Gastrocnemius medialis (tissue), 4 donors: ENCODE measurements at regions of chr6 and their contacts with region 1.

Region 1: GRCh38 chr6:42911171-42912021 is 4.5 kb upstream of the PTCRA start:
- DNase-seq: no peak
- ATAC-seq: no peak
- H3K4me3 ChIP-seq: peak overlapping the region in 2 of 4 donors; percentile 10 to 22
- H3K27ac ChIP-seq: no peak overlapping the region
- H3K4me1 ChIP-seq: peaks cover 0 to 2% of the 10 kb centered on the region in 2 donors
- H3K27me3 ChIP-seq: peaks cover 11 to 19% (median 15%) of the 10 kb centered on the region in 3 donors
- CTCF ChIP-seq: no peak
- POLR2A ChIP-seq: no peak

Region 2: DNA sequence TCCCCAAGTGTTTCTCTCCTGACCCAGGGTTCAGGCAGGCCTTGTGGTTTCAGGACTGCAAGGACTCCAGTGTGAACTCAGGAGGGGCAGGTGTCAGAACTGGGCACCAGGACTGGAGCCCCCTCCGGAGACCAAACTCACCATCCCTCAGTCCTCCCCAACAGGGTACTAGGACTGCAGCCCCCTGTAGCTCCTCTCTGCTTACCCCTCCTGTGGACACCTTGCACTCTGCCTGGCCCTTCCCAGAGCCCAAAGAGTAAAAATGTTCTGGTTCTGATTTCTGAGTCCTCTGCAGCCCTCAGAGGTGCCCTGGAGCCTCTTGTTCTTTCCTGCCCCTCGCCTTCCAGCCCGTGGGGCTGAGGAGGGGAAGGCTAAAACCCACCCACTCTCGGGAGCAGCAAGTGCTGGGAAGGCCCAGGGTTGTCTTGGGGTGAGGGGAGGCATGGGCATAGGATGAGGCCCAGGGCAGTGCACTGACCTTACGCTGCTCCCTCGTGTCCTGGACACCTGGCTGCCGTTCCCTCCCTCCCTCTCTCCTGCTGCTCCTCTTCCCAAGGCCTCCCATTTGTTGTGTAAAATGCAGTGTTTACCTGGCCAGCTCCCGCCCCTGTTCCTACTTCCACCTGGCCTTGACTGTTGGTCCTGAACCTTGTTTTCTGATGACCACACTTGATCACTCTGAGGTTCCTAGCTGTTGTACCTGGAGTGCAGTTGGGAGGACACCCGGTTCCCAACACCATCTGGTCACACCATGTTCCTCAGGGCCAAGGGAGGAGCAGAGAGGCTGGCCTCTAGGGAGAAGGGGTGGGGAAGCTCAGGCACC is 27.8 kb after region 1 on chr6:
- in situ Hi-C with region 1: no loop called
- intact Hi-C with region 1: loop called (anchors 2 kb)
- DNase-seq: no peak
- ATAC-seq: no peak
- H3K4me3 ChIP-seq: no peak overlapping the region
- H3K27ac ChIP-seq: no peak overlapping the region
- H3K4me1 ChIP-seq: no peaks in the 10 kb centered on the region
- H3K27me3 ChIP-seq: no peaks in the 10 kb centered on the region
- CTCF ChIP-seq: no peak
- POLR2A ChIP-seq: no peak